Mammary epithelial cell (primary cell): ENCODE measurements at regions of chr12 and their contacts with region 1.

Region 1: GRCh38 chr12:10749700-10750384 is 26.7 kb upstream of the YBX3 start:
- DNase-seq: peak; percentile 90
- H3K4me3 ChIP-seq: peak overlapping the region; percentile 6 to 34 (median 11)
- H3K27ac ChIP-seq: peak overlapping the region; percentile 51
- H3K4me1 ChIP-seq: peaks cover 7% of the 10 kb centered on the region
- H3K27me3 ChIP-seq: no peaks in the 10 kb centered on the region
- CTCF ChIP-seq: peak; percentile 90 to 93

Region 2: GRCh38 chr12:10613349-10614055 is 136.3 kb before region 1 on chr12 and contains the start of gene MAGOHB:
- CTCF ChIA-PET with region 1: interaction called, 4 read pairs
- dilution Hi-C with region 1: no loop called
- in situ Hi-C with region 1: no loop called
- intact Hi-C with region 1: loop called (anchors 1 kb)
- DNase-seq: peak; percentile 95
- H3K4me3 ChIP-seq: peak within 1 kb of the TSS; percentile 93 to 99 (median 96)
- H3K27ac ChIP-seq: peak within 1 kb of the TSS; percentile 100
- H3K4me1 ChIP-seq: peaks cover 26% of the 10 kb centered on the region
- H3K27me3 ChIP-seq: no peaks in the 10 kb centered on the region
- CTCF ChIP-seq: no peak
- total RNA-seq, gene MAGOHB: 10.7 to 28.0 TPM

Region 3: DNA sequence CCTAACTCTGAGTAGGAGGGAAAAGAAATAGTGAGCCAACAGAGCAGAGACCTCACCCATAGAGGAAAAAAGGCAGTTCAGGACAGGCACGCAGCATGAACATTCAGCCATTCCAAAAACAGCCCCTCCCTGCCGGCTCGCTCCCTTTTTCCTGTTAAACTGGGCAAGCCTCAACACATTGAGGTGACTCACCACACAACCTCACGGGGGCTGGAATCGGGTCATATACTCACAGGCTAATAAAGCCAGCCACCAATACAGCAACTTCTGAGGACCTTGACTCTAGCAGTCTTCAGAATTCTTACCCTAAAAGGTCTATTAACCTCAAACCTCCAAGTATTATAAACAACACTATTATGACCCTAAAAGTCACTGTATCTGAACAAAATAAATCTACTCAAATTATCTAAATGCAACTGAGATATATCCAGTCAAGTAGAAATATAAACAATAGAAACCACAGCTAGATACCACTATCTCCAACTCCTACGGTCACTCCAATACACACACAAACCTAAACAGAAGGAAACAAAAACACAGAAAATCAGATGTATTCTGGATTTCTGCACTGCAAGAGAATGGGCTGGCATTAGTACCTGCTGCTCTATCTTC is 33.0 kb before region 1 on chr12:
- CTCF ChIA-PET with region 1: interaction called, 9 read pairs
- dilution Hi-C with region 1: no loop called
- in situ Hi-C with region 1: no loop called
- intact Hi-C with region 1: loop called (anchors 1 kb)
- DNase-seq: peak; percentile 94
- H3K4me3 ChIP-seq: peak overlapping the region; percentile 33 to 71 (median 33)
- H3K27ac ChIP-seq: peak overlapping the region; percentile 98
- H3K4me1 ChIP-seq: peaks cover 52% of the 10 kb centered on the region
- H3K27me3 ChIP-seq: no peaks in the 10 kb centered on the region
- CTCF ChIP-seq: no peak